ENCODE measurements at regions of chr5 and their contacts with region 1.

Region 1: DNA sequence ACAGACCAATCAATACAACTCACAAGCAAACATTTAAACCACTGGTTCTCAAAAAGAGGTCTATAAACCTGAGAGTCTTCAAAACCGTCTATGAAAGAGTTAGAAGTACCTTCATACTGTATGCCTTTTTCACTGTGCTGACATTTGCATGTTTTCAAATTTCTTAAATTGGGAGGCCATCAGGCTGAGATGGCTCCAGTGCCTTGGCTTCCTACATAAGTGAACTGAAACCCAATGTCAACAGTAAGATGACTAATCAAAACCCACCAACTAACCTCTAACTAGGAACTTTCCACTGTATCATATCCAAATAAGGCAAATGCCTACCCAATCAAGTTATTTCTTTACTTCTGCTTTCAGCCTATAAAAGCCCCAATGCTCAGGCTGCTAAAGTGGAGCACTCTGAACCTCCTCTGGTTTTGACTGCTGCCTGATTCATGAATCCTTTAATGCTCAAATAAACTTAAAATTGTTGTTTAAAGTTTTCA is 35.1 kb downstream of the FAM13B start:
- DNase-seq: peak in 2 of 4 experiments; percentile 31 to 59
- ATAC-seq: peak; percentile 35
- H3K4me3 ChIP-seq: peak overlapping the region; percentile 8; the same call in 1 of the 2 replicates
- H3K27ac ChIP-seq: peak overlapping the region; percentile 89
- H3K4me1 ChIP-seq: peaks cover 8 to 46% of the 10 kb centered on the region in 2 experiments; a peak in 4 of 5 replicates
- H3K27me3 ChIP-seq: no peaks in the 10 kb centered on the region
- CTCF ChIP-seq: no peak
- EP300 ChIP-seq: peak; percentile 56
- POLR2A ChIP-seq: peak; percentile 47; the same call in 1 of the 2 replicates
- RAD21 ChIP-seq: no peak

Region 2: DNA sequence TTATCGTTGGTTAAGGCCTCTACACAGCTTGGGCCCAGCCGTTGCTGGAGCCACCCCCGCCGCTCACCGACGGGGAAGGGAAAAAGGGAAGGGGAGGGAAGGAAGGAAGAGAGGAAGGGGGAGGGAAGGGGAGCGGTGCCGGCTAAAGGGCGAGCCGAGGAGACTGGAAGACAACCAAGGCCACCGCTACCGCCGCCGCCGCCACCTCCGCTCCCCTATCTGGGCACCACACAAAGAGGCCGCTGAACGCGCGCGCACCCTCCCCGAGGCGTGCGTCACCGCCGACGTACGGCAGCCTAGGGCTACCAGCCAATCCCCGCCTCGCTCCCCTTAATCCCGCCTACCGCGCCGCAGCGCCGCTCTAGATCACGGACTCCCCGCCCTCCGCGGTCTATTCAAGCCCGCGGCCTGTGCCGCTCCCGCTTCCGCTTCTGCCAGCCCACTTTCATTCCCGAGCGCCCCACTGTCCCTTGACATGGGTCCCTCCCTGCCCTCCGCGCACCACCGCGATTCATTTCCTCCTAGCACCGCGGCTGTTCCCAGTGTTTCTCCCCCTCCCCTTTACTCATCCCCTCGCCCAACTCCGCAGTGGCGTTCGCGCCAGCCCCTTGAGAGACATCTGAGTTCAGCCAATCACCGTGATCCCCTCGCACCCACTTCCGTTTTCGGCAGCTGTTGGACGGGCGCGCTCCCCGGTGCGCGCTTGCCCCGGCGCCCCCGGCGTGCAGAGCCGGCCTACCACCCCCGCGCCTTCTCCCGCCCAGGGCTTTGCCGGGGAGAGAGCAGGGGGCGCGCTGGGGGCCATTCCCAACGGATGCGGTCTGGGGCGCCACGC is 243.4 kb before region 1 on chr5 and contains the start of gene HNRNPA0:
- CTCF ChIA-PET with region 1: no interaction called
- POLR2A ChIA-PET with region 1: interaction called, 4 read pairs
- in situ Hi-C with region 1: no loop called
- intact Hi-C with region 1: loop called (anchors 5 kb)
- DNase-seq: peak; percentile 94 to 98 (median 96)
- ATAC-seq: peak; percentile 91
- H3K4me3 ChIP-seq: peak within 1 kb of the TSS; percentile 76
- H3K27ac ChIP-seq: peak within 1 kb of the TSS; percentile 97
- H3K4me1 ChIP-seq: peaks cover 0 to 16% of the 10 kb centered on the region in 2 experiments; a peak in 3 of 5 replicates
- H3K27me3 ChIP-seq: peaks cover 5 to 6% of the 10 kb centered on the region in 2 experiments; a peak in 3 of 5 replicates
- CTCF ChIP-seq: peak in 2 of 3 experiments; percentile 17 to 33; a peak in 2 of 6 replicates
- EP300 ChIP-seq: peak; percentile 96
- POLR2A ChIP-seq: peak; percentile 98
- RAD21 ChIP-seq: no peak
- polyA plus RNA-seq, gene HNRNPA0: 5.0 to 5.7 TPM

Region 3: DNA sequence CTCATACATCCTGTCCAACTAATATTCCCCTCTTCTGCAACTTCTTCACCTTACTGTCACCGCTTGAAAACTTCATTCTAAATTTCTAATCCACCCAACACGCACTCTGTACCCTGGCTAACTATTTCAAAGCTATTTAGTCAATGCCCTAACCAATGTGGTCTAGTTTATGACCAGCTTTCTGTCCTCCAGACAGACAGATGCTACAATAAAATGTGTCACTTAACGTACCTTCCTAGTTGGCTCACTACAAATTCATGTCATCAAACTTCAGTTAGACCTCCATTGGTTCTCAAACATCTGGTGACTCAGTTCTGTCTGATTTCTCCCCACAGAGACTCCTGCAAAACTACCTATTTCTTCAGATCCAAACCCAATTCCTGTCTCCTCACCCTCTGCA is 22.6 kb before region 1 on chr5:
- CTCF ChIA-PET with region 1: no interaction called
- POLR2A ChIA-PET with region 1: no interaction called
- in situ Hi-C with region 1: no loop called
- intact Hi-C with region 1: no loop called
- DNase-seq: no peak
- ATAC-seq: no peak
- H3K4me3 ChIP-seq: no peak overlapping the region
- H3K27ac ChIP-seq: no peak overlapping the region
- H3K4me1 ChIP-seq: no peaks in the 10 kb centered on the region
- H3K27me3 ChIP-seq: no peaks in the 10 kb centered on the region
- CTCF ChIP-seq: no peak
- EP300 ChIP-seq: no peak
- POLR2A ChIP-seq: no peak
- RAD21 ChIP-seq: no peak